IMR-90 (cell line): ENCODE measurements at regions of chr9 and their contacts with region 1.

Region 1: GRCh38 chr9:107637421-107638420 is 148.2 kb upstream of the KLF4 start:
- DNase-seq: peak; percentile 98
- ATAC-seq: peak; percentile 90
- H3K4me3 ChIP-seq: peak overlapping the region; percentile 37
- H3K27ac ChIP-seq: peak overlapping the region; percentile 77
- H3K4me1 ChIP-seq: peaks cover 10% of the 10 kb centered on the region
- H3K27me3 ChIP-seq: no peaks in the 10 kb centered on the region
- CTCF ChIP-seq: peak; percentile 28; the same call in 1 of the 2 replicates
- POLR2A ChIP-seq: peak; percentile 91
- RAD21 ChIP-seq: peak; percentile 34

Region 2: GRCh38 chr9:107489687-107490605 is 147.8 kb before region 1 on chr9 and contains the start of gene KLF4:
- CTCF ChIA-PET with region 1: no interaction called
- POLR2A ChIA-PET with region 1: no interaction called
- dilution Hi-C with region 1: no loop called
- in situ Hi-C with region 1: no loop called
- intact Hi-C with region 1: loop called (anchors 1 kb)
- DNase-seq: peak; percentile 91
- ATAC-seq: peak; percentile 78
- H3K4me3 ChIP-seq: peak within 1 kb of the TSS; percentile 60
- H3K27ac ChIP-seq: peak within 1 kb of the TSS; percentile 60
- H3K4me1 ChIP-seq: peaks cover 2% of the 10 kb centered on the region; the same call in 1 of the 2 replicates
- H3K27me3 ChIP-seq: peaks cover 1% of the 10 kb centered on the region; the same call in 1 of the 2 replicates
- CTCF ChIP-seq: 0 out of 2 replicates have a peak, but pooled peaks have one; percentile 0
- POLR2A ChIP-seq: peak; percentile 93
- RAD21 ChIP-seq: no peak
- total RNA-seq, gene KLF4: 1.3 and 2.2 TPM in 2 replicates

Region 3: DNA sequence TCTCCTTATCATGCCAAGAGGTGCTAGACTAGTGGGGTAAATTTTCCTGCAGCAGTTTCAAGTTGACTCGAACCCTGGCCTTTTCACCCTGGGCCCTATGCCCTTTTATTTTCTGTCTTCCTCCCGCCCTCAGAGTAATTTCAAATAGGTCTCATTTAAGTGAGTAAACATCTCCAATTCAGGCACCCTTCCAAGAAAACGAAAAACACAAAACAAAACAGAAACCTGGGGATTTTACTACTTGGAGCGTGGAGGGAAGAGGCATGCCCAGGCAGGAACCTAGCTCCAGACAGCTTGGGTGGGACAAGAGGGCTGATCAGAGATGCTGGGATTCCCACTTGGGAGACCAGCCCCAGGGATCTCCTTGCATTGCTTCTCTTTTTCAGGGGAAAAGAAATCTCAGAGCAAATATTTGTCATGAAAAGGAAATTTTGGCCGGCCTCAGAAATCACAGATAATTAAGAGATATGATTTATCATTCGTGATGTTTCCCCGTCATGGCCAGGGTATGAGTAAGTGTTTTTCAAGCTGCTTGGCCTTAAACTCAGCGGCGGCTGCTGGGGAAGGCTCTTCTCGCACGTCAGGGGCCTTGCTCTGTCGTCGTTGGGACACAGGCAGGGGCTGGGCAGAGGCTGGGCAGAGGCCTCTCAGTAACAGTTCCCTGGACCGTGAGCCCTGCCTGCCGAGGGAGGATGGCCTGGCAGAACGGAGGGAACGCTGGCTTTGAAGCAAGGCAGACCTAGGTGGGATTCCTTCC is 100.4 kb after region 1 on chr9:
- CTCF ChIA-PET with region 1: no interaction called
- POLR2A ChIA-PET with region 1: no interaction called
- dilution Hi-C with region 1: no loop called
- in situ Hi-C with region 1: no loop called
- intact Hi-C with region 1: loop called (anchors 1 kb)
- DNase-seq: peak; percentile 95
- ATAC-seq: peak; percentile 83
- H3K4me3 ChIP-seq: no peak overlapping the region
- H3K27ac ChIP-seq: peak overlapping the region; percentile 96
- H3K4me1 ChIP-seq: peaks cover 39% of the 10 kb centered on the region
- H3K27me3 ChIP-seq: no peaks in the 10 kb centered on the region
- CTCF ChIP-seq: no peak; the same call in 1 of the 2 replicates
- POLR2A ChIP-seq: peak; percentile 87
- RAD21 ChIP-seq: no peak; the same call in none of the 2 replicates

Region 4: GRCh38 chr9:107833301-107833700 is 195.6 kb after region 1 on chr9:
- CTCF ChIA-PET with region 1: no interaction called
- POLR2A ChIA-PET with region 1: no interaction called
- dilution Hi-C with region 1: no loop called
- in situ Hi-C with region 1: no loop called
- intact Hi-C with region 1: loop called (anchors 5 kb)
- DNase-seq: peak; percentile 5
- ATAC-seq: peak; percentile 51; the same call in 1 of the 2 replicates
- H3K4me3 ChIP-seq: no peak overlapping the region
- H3K27ac ChIP-seq: no peak overlapping the region
- H3K4me1 ChIP-seq: no peaks in the 10 kb centered on the region; the same call in 1 of the 2 replicates
- H3K27me3 ChIP-seq: no peaks in the 10 kb centered on the region
- CTCF ChIP-seq: no peak
- POLR2A ChIP-seq: no peak
- RAD21 ChIP-seq: no peak

Region 5: GRCh38 chr9:108105885-108106284 is 468.2 kb after region 1 on chr9:
- CTCF ChIA-PET with region 1: no interaction called
- POLR2A ChIA-PET with region 1: no interaction called
- dilution Hi-C with region 1: no loop called
- in situ Hi-C with region 1: no loop called
- intact Hi-C with region 1: loop called (anchors 5 kb)
- DNase-seq: no peak
- ATAC-seq: no peak
- H3K4me3 ChIP-seq: no peak overlapping the region
- H3K27ac ChIP-seq: no peak overlapping the region
- H3K4me1 ChIP-seq: peaks cover 6% of the 10 kb centered on the region; the same call in 1 of the 2 replicates
- H3K27me3 ChIP-seq: no peaks in the 10 kb centered on the region; the same call in 1 of the 2 replicates
- CTCF ChIP-seq: no peak
- POLR2A ChIP-seq: no peak
- RAD21 ChIP-seq: no peak

Region 6: GRCh38 chr9:108551030-108551838 is 913.5 kb after region 1 on chr9:
- CTCF ChIA-PET with region 1: no interaction called
- POLR2A ChIA-PET with region 1: no interaction called
- dilution Hi-C with region 1: no loop called
- in situ Hi-C with region 1: no loop called
- intact Hi-C with region 1: loop called (anchors 5 kb)
- DNase-seq: peak; percentile 96
- ATAC-seq: peak; percentile 94
- H3K4me3 ChIP-seq: no peak overlapping the region
- H3K27ac ChIP-seq: peak overlapping the region; percentile 89
- H3K4me1 ChIP-seq: peaks cover 16% of the 10 kb centered on the region
- H3K27me3 ChIP-seq: no peaks in the 10 kb centered on the region
- CTCF ChIP-seq: no peak
- POLR2A ChIP-seq: no peak
- RAD21 ChIP-seq: peak; percentile 24; the same call in 1 of the 2 replicates